Upper lobe of right lung (tissue), 1 donor: ENCODE measurements at regions of chr1 and their contacts with region 1.

Region 1: DNA sequence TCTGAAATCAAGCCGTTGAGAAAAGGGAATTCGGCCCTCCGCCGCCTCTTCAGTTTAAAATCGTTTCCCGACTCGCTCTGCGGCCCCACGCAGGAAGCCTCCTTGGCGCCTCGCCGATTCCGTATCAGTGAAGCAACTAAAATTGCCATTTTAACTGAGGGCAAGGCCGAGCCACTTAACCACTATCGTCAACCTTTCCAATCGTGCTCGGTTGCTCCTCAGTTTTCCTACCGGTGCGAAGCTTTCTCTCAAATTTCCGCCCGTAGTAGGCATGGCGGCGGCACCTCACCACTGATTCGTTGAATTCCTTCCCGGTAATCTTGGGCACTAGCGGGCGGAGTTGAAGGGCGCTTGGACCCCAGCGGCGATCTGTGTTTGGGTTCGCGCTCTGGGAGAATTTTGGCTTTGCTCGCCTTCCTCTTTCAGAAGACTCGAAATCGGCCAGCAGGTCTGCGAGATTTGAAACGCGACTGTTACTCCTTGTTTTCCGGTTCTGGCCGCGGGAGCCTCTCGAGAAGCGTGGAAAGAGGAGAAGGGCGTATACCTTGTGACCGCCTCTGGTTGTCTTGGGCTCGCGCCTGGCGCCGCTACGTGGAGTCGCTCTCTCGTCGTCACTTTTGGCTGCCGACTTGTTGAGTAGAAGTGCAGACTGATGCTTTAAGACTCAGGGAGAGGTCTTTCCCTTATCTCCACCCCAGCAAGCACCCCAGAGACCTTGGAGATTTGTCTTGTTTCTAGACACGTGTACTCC is at the starts of genes CENPL and DARS2:
- DNase-seq: peak; percentile 97
- ATAC-seq: peak; percentile 99
- H3K4me3 ChIP-seq: peak within 1 kb of the TSS; percentile 88
- H3K27ac ChIP-seq: peak within 1 kb of the TSS; percentile 88
- H3K4me1 ChIP-seq: peaks cover 3% of the 10 kb centered on the region
- H3K27me3 ChIP-seq: no peaks in the 10 kb centered on the region
- CTCF ChIP-seq: no peak
- total RNA-seq, gene CENPL: 4.3 TPM
- total RNA-seq, gene DARS2: 14.6 TPM

Region 2: GRCh38 chr1:173429471-173430402 is 394.8 kb before region 1 on chr1:
- intact Hi-C with region 1: loop called (anchors 5 kb)
- DNase-seq: peak; percentile 90
- ATAC-seq: peak; percentile 94
- H3K4me3 ChIP-seq: peak overlapping the region; percentile 14
- H3K27ac ChIP-seq: peak overlapping the region; percentile 79
- H3K4me1 ChIP-seq: peaks cover 21% of the 10 kb centered on the region
- H3K27me3 ChIP-seq: no peaks in the 10 kb centered on the region
- CTCF ChIP-seq: peak; percentile 60

Region 3: DNA sequence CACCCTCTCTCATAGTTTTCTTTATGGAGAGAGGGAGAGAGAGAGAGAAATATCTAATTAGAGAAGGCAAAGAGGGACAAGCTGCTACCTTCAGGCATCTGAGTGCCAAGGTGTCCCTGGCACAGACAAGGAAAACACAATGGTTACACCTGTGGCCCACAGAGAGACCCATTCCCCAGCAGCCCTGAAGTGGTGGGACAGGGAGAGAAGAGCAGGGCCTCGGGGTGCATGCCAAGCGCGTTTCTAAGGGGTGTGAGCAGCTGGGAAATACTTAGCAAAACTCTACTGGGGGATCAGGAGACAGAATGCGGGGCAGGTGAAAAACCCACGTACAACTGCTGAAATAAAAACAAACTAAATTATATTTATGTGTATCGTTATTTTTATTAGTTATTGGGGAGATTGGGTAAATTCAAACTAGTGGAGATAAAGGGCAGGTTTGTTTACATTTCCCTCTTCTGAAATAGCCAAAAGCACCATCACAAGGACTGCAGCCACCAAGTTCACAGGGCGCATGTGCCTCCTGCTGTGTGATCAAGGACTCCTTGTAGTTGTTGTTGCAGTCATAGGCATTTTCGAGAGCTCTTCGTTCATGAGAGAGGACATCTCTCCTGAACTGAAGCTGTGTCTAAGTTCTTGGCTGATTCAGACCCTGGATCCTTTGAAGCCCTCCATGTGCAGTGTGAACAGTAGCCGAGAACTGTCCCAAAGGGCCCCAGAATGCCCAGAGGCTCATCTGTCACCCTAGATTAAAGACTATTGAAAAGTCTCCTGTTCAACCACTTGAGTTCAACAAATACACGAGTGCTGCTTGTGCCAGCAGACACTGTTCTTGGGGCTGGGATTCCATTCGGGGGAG is 93.4 kb after region 1 on chr1:
- intact Hi-C with region 1: no loop called
- DNase-seq: no peak
- ATAC-seq: peak; percentile 66
- H3K4me3 ChIP-seq: no peak overlapping the region
- H3K27ac ChIP-seq: no peak overlapping the region
- H3K4me1 ChIP-seq: no peaks in the 10 kb centered on the region
- H3K27me3 ChIP-seq: no peaks in the 10 kb centered on the region
- CTCF ChIP-seq: no peak